ENCODE measurements at regions of chr15 and their contacts with region 1.

Region 1: DNA sequence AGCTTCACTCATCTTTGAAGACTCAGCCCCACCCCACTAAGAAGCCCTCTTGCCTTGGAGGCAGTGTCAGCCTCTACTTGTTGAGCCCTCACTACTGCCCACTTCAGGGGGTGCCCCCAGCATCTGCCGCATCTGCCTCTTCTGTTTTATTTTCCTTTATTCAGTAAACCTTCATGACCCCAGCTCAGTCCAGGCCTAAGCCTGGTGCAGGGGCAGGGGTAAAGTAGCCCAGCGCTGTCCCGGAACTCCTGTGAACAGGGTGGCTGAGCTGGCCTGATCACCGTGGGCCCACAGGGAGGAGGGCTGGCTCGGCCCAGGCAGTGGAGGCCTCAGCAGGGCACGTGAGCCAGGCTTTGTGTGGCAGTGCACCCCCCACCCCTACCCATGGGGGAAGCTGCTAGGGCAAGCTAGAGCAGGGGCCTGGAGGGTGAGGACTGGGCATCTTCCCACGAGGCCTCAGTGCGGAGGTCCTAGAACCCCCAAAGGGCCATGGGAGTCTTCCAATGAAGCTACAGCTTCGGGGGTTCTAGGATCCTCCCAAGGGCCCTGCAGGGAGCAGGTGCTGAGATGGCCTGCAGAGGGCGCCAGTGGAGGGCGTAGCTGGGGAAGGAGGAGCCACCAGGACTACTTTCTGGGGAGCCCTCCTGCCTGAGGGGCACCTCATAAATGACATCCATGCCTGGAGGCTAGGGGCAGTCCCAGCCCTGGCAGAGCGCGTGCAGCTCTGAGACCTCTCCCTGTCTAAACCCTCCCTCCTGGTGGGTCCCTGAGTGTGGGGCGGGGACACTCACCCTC is 36.0 kb downstream of the TSPAN3 start:
- DNase-seq: peak; percentile 66
- ATAC-seq: peak; percentile 41
- H3K4me3 Mint-ChIP-seq: no peak overlapping the region
- H3K27ac Mint-ChIP-seq: peak overlapping the region; percentile 20
- H3K4me1 Mint-ChIP-seq: peaks cover 11% of the 10 kb centered on the region
- H3K27me3 Mint-ChIP-seq: no peaks in the 10 kb centered on the region
- CTCF ChIP-seq: peak; percentile 66

Region 2: DNA sequence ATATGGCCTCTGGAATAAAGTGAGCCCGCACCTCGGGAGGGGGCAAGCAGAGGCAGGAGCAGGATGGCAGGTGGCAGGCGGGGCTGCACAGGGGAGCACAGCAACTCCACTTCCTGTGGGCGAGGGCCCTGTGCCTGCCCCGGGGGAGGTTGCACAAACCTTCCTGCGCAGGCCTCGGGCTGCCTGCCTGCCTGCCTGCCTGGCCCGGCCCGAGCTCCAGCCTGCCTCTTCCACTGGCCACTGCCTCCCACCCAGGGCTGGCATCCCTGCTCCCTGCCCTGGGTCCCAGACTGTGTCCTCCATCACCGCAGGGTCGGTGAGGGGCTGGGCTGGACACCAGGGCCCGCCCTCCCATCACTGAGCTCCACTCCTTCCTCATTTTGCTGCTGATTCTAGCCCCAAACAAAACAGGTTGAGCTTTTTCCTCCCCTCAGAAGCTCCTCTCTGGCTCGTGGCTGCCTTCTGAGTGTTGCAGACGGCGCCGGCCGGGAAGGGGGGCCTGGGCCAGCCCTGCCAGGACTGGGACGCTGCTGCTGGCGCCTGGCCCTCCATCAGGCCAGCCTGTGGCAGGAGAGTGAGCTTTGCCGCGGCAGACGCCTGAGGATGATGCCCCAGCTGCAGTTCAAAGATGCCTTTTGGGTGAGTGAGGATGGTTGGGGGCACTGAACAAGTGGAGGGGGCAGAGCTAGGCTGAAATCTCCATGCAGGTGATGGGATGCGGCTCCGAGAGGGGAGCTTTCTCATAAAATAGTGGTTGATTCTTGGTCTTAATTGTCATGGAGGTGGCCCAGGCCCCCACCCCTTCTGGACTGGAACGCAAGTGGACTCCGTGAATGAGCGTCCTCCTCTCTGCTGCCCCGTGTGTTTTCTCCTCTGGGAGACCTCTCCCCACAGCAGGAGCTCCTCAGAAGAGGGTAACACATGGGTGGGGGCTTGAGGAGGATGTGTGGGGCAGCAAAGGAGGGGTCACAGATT is 39.6 kb before region 1 on chr15 and contains the start of gene PSTPIP1:
- CTCF ChIA-PET with region 1: interaction called, 12 read pairs
- POLR2A ChIA-PET with region 1: interaction called, 4 read pairs
- intact Hi-C with region 1: no loop called
- DNase-seq: peak; percentile 83
- ATAC-seq: peak; percentile 69
- H3K4me3 Mint-ChIP-seq: peak within 1 kb of the TSS; percentile 95
- H3K27ac Mint-ChIP-seq: peak within 1 kb of the TSS; percentile 98
- H3K4me1 Mint-ChIP-seq: peaks cover 61% of the 10 kb centered on the region
- H3K27me3 Mint-ChIP-seq: no peaks in the 10 kb centered on the region
- CTCF ChIP-seq: no peak
- total RNA-seq, gene PSTPIP1: 113 to 121 TPM